ENCODE measurements at regions of chr6 and their contacts with region 1.

Region 1: GRCh38 chr6:125986300-125987025 is at the start of gene TRMT11:
- DNase-seq: peak; percentile 92
- H3K4me3 Mint-ChIP-seq: no peak within 1 kb of the TSS
- H3K27ac Mint-ChIP-seq: no peak within 1 kb of the TSS
- H3K4me1 Mint-ChIP-seq: no peaks in the 10 kb centered on the region
- H3K27me3 Mint-ChIP-seq: no peaks in the 10 kb centered on the region
- CTCF ChIP-seq: no peak
- total RNA-seq, gene TRMT11: 28.8 and 32.5 TPM in 2 replicates

Region 2: DNA sequence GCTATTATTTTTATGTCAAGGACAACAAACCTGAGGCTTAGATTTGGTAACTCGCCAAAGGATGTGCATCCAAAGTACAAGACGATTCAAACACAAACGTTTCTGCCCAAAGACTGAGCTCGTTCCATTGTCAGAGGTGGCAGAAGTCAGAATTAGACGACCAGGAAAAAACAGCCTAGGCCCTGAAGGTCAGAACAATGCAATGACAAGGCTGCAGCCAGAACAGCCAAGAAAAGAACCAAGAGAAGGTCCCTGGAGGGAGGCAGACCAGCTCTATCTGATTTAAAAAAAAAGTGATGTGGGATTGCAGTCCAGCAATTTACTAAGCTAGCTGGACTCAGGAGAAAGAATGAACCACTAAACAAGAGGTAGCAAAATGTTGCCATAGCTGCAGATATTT is 141.5 kb before region 1 on chr6:
- CTCF ChIA-PET with region 1: no interaction called
- POLR2A ChIA-PET with region 1: no interaction called
- intact Hi-C with region 1: no loop called
- DNase-seq: no peak
- H3K4me3 Mint-ChIP-seq: no peak overlapping the region
- H3K27ac Mint-ChIP-seq: no peak overlapping the region
- H3K4me1 Mint-ChIP-seq: no peaks in the 10 kb centered on the region
- H3K27me3 Mint-ChIP-seq: no peaks in the 10 kb centered on the region
- CTCF ChIP-seq: no peak

Region 3: DNA sequence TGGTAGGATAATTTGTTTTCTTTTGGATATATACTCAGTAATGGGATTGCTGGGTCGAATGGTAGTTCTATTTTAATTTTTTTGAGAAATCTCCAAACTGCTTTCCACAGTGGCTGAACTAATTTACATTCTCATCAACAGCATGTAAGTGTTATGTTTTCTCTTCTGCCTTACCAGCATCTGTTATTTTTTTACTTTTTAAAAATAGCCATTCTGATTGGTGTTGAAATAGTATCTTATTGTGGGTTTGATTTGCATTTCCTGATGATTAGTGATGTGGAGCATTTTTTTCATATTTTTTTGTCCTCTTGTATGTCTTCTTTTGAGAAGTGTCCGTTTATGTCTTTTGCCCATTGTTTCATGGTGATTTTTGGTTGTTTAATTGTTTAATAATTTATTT is 18.0 kb before region 1 on chr6:
- CTCF ChIA-PET with region 1: interaction called, 35 read pairs
- POLR2A ChIA-PET with region 1: interaction called, 13 read pairs
- intact Hi-C with region 1: no loop called
- DNase-seq: no peak
- H3K4me3 Mint-ChIP-seq: no peak overlapping the region
- H3K27ac Mint-ChIP-seq: no peak overlapping the region
- H3K4me1 Mint-ChIP-seq: no peaks in the 10 kb centered on the region
- H3K27me3 Mint-ChIP-seq: no peaks in the 10 kb centered on the region
- CTCF ChIP-seq: no peak

Region 4: DNA sequence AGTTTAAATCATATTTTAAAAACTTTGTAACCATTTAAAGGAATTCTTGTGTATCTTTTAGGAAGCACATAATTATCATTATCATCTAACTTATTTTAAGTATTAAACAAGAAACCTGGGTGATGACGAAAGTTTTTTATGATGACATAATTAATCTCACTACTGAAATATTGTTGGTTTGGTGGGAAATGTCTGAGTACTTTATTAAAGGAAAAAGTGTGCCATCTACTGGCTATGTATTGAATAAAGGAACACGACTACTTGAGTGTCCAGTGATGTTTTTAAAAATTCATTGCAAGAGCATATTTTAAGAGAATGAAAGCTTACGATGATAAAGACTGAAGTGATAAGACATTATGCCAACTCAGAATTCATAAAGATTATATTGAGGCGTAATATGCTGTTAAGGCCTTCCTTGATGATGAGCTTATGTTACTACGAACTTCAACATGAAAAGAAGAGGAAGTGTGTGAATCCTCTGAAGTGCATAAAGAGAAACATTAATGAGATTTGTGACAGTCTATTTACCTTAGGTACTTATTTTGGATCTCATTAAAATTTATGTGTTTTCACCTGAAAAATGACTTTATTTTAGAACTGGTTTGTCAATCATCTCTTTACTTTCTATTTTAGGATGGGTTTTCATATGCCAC is 12.1 kb before region 1 on chr6:
- CTCF ChIA-PET with region 1: interaction called, 35 read pairs
- POLR2A ChIA-PET with region 1: interaction called, 14 read pairs
- intact Hi-C with region 1: no loop called
- DNase-seq: peak; percentile 66
- H3K4me3 Mint-ChIP-seq: no peak overlapping the region
- H3K27ac Mint-ChIP-seq: no peak overlapping the region
- H3K4me1 Mint-ChIP-seq: peaks cover 5% of the 10 kb centered on the region
- H3K27me3 Mint-ChIP-seq: no peaks in the 10 kb centered on the region
- CTCF ChIP-seq: peak; percentile 44